ENCODE measurements at regions of chr11 and their contacts with region 1.

Region 1: DNA sequence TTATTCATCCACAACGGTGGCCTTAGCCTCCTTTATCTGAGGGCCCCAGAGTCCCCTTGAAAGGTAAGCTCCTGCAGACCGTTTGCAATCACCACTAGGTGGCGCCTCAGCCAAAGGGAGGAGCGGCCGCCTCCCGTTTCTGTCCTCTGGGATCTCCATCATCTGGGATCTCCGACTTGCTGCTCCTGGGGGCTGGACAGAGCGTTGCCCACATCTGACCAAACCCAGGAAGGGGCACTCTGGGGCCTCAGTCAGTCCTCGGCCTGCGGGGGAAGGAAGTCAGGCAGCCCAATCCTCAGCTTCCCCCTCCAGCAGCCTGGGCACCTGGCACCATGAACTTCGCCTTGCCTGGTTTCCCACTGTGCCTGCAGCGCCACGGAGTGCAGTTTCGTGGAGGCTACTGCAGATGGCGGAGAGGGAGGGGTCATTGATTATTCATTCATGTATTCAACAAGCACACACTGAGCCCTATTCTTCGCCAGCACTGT is 23.5 kb downstream of the TP53I11 start:
- DNase-seq: peak; percentile 51
- H3K27ac ChIP-seq: no peak overlapping the region
- CTCF ChIP-seq: peak; percentile 93

Region 2: GRCh38 chr11:44876906-44877305 is 50.3 kb before region 1 on chr11:
- CTCF ChIA-PET with region 1: no interaction called
- POLR2A ChIA-PET with region 1: no interaction called
- DNase-seq: no peak
- H3K27ac ChIP-seq: no peak overlapping the region
- CTCF ChIP-seq: no peak

Region 3: GRCh38 chr11:44963136-44963535 is 35.9 kb after region 1 on chr11:
- CTCF ChIA-PET with region 1: interaction called, 11 read pairs
- POLR2A ChIA-PET with region 1: no interaction called
- DNase-seq: no peak
- H3K27ac ChIP-seq: no peak overlapping the region
- CTCF ChIP-seq: no peak

Measured in RWPE1 (cell line).